ENCODE measurements at regions of chr10 and their contacts with region 1.

Region 1: GRCh38 chr10:9331583-9332008 is 1277.1 kb downstream of the GATA3 start:
- DNase-seq: peak; percentile 58
- CTCF ChIP-seq: peak; percentile 51

Region 2: GRCh38 chr10:9869205-9869604 is 537.6 kb after region 1 on chr10:
- in situ Hi-C with region 1: no loop called
- DNase-seq: no peak
- CTCF ChIP-seq: no peak

Region 3: DNA sequence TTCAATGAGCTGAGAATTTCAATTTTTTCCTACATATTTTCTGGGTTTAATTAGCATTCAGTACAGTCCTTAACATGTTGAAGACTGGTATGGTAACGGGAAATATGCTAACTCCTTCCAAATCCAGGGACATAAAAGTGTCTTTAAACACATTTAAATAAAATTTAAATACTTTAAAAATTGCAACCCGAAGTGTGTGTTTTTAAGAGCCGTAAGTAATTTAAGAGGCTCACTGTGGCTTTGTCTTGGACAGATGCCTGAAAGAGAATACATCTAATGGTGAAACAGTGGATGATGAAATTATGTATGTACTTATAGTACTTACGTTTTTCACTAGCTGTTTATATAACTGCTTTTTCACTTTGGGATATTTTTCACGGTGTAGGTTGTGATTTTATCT is 998.8 kb after region 1 on chr10:
- in situ Hi-C with region 1: loop called (anchors 25 kb)
- DNase-seq: no peak
- CTCF ChIP-seq: no peak

Region 4: GRCh38 chr10:10432296-10433035 is 1100.9 kb after region 1 on chr10:
- in situ Hi-C with region 1: no loop called
- DNase-seq: no peak
- CTCF ChIP-seq: no peak

Region 5: DNA sequence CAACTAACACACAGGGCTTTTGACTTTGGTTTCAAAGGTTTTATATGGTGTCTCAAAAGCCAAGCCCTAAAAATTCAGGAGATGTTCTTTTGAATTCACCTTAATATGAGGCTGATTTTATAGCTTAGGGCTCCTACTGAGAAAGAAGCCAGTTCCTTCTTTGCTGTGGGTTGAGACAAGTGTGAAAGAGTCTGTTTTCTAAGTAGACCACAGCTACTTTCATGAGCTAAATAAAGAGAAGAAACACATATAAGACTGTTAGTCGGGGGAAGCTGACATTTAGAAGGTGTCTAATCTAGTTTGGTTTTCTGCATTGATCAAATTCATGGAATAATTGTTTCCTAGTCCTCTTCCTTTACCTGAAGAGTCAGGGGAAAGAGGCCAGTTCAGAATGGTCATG is 1354.0 kb after region 1 on chr10:
- in situ Hi-C with region 1: loop called (anchors 10 kb)
- DNase-seq: no peak
- CTCF ChIP-seq: no peak